ENCODE measurements at regions of chr2 and their contacts with region 1.

Region 1: GRCh38 chr2:207710814-207711740 is at the start of gene CCNYL1:
- DNase-seq: peak; percentile 100
- H3K4me3 ChIP-seq: peak within 1 kb of the TSS; percentile 71 to 98 (median 90)
- H3K27ac ChIP-seq: peak within 1 kb of the TSS; percentile 83 to 96 (median 88)
- H3K4me1 ChIP-seq: peaks cover 6 to 43% (median 26%) of the 10 kb centered on the region in 6 donors
- H3K27me3 ChIP-seq: no peaks in the 10 kb centered on the region
- CTCF ChIP-seq: peak in 10 of 11 experiments; percentile 47 to 88 (median 58)
- POLR2A ChIP-seq: peak in 2 of 3 donors; percentile 30 to 95
- total RNA-seq, gene CCNYL1: 14.0 to 22.8 (median 16.6) TPM

Region 2: GRCh38 chr2:207529330-207530159 is 181.5 kb before region 1 on chr2 and contains the start of gene CREB1:
- intact Hi-C with region 1: loop called (anchors 10 kb)
- DNase-seq: peak; percentile 100
- H3K4me3 ChIP-seq: peak within 1 kb of the TSS; percentile 52 to 89 (median 66)
- H3K27ac ChIP-seq: peak within 1 kb of the TSS; percentile 95 to 100 (median 99)
- H3K4me1 ChIP-seq: peaks cover 38 to 84% (median 61%) of the 10 kb centered on the region in 6 donors
- H3K27me3 ChIP-seq: no peaks in the 10 kb centered on the region
- CTCF ChIP-seq: peak in 3 of 11 experiments; percentile 25 to 44 (median 43)
- POLR2A ChIP-seq: peak; percentile 76 to 97 (median 95)
- total RNA-seq, gene CREB1: 70.2 to 94.7 (median 83.9) TPM

Region 3: GRCh38 chr2:207625018-207625907 is 85.8 kb before region 1 on chr2 and contains the start of gene METTL21A:
- intact Hi-C with region 1: loop called (anchors 5 kb)
- DNase-seq: peak; percentile 98
- H3K4me3 ChIP-seq: peak within 1 kb of the TSS; percentile 73 to 94 (median 86)
- H3K27ac ChIP-seq: peak within 1 kb of the TSS; percentile 96 to 99 (median 98)
- H3K4me1 ChIP-seq: peaks cover 10 to 64% (median 53%) of the 10 kb centered on the region in 6 donors
- H3K27me3 ChIP-seq: no peaks in the 10 kb centered on the region
- CTCF ChIP-seq: peak; percentile 44 to 76 (median 65)
- POLR2A ChIP-seq: peak in 2 of 3 donors; percentile 38 to 47
- total RNA-seq, gene METTL21A: 18.8 to 43.6 (median 24.1) TPM

Region 4: DNA sequence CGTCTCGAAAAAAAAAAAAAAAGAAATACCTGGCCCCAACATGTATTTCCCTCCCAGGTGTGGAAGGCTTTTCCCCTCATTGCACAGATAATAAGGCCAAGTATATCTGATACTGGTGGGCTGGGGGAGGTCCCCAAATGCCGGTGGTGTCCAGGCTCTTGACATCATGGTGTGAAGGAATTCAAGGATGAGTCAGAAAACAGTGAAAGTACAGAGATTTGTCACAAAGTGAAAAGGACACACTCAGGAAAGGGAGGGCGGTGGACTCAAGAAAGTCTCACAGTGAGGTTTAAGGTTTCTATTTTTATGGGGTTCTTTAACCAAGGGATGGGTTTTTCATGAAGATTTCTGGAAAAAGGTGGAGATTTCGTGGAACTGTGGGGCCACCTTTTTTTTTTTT is 96.4 kb after region 1 on chr2:
- intact Hi-C with region 1: no loop called
- DNase-seq: no peak
- H3K4me3 ChIP-seq: no peak overlapping the region
- H3K27ac ChIP-seq: no peak overlapping the region
- H3K4me1 ChIP-seq: peaks cover 0 to 16% (median 9%) of the 10 kb centered on the region in 6 donors
- H3K27me3 ChIP-seq: no peaks in the 10 kb centered on the region
- CTCF ChIP-seq: no peak
- POLR2A ChIP-seq: no peak

Region 5: GRCh38 chr2:207993151-207993763 is 282.2 kb after region 1 on chr2:
- intact Hi-C with region 1: no loop called
- DNase-seq: no peak
- H3K4me3 ChIP-seq: no peak overlapping the region
- H3K27ac ChIP-seq: no peak overlapping the region
- H3K4me1 ChIP-seq: peaks cover 0 to 34% (median 4%) of the 10 kb centered on the region in 6 donors
- H3K27me3 ChIP-seq: no peaks in the 10 kb centered on the region
- CTCF ChIP-seq: no peak
- POLR2A ChIP-seq: no peak